Naive thymus-derived CD8-positive, alpha-beta T cell (primary cell): ENCODE measurements at regions of chr3 and their contacts with region 1.

Region 1: GRCh38 chr3:47164007-47164881 is at the start of gene SETD2:
- DNase-seq: peak; percentile 74 to 93 (median 80)
- ATAC-seq: peak; percentile 85
- H3K4me3 Mint-ChIP-seq: peak within 1 kb of the TSS; percentile 89 to 100 (median 98)
- H3K27ac Mint-ChIP-seq: peak within 1 kb of the TSS; percentile 96 to 99 (median 99)
- H3K4me1 Mint-ChIP-seq: peaks cover 21 to 57% (median 49%) of the 10 kb centered on the region in 4 donors
- H3K27me3 Mint-ChIP-seq: peaks cover 0 to 3% (median 0%) of the 10 kb centered on the region in 5 donors
- polyA plus RNA-seq, gene SETD2: 11.8 to 23.4 (median 14.3) TPM

Region 2: GRCh38 chr3:46935168-46935858 is 228.9 kb before region 1 on chr3:
- POLR2A ChIA-PET with region 1: no interaction called
- DNase-seq: no peak
- ATAC-seq: no peak
- H3K4me3 Mint-ChIP-seq: no peak overlapping the region
- H3K27ac Mint-ChIP-seq: peak overlapping the region in 5 of 10 donors; percentile 12 to 66 (median 29)
- H3K4me1 Mint-ChIP-seq: peaks cover 28 to 94% (median 66%) of the 10 kb centered on the region in 4 donors
- H3K27me3 Mint-ChIP-seq: no peaks in the 10 kb centered on the region

Region 3: GRCh38 chr3:46976326-46977190 is 187.7 kb before region 1 on chr3 and contains the start of gene CCDC12:
- POLR2A ChIA-PET with region 1: interaction called, 12 read pairs
- DNase-seq: peak; percentile 78 to 99 (median 94)
- ATAC-seq: peak; percentile 81 to 83
- H3K4me3 Mint-ChIP-seq: peak within 1 kb of the TSS; percentile 90 to 100 (median 99)
- H3K27ac Mint-ChIP-seq: peak within 1 kb of the TSS; percentile 96 to 100 (median 99)
- H3K4me1 Mint-ChIP-seq: peaks cover 36 to 80% (median 72%) of the 10 kb centered on the region in 4 donors
- H3K27me3 Mint-ChIP-seq: no peaks in the 10 kb centered on the region
- polyA plus RNA-seq, gene CCDC12: 81.9 to 106 (median 106) TPM

Region 4: GRCh38 chr3:47282424-47283192 is 118.4 kb after region 1 on chr3 and contains the starts of genes KIF9 and KLHL18:
- POLR2A ChIA-PET with region 1: interaction called, 13 read pairs
- DNase-seq: peak; percentile 92 to 99 (median 97)
- ATAC-seq: peak; percentile 81 to 82
- H3K4me3 Mint-ChIP-seq: peak within 1 kb of the TSS; percentile 91 to 100 (median 98)
- H3K27ac Mint-ChIP-seq: peak within 1 kb of the TSS; percentile 99 to 100 (median 99)
- H3K4me1 Mint-ChIP-seq: peaks cover 26 to 56% (median 50%) of the 10 kb centered on the region in 4 donors
- H3K27me3 Mint-ChIP-seq: peaks cover 0 to 3% (median 0%) of the 10 kb centered on the region in 5 donors
- polyA plus RNA-seq, gene KIF9: 3.7 to 10.2 (median 5.4) TPM
- polyA plus RNA-seq, gene KLHL18: 13.4 to 18.2 (median 16.4) TPM

Region 5: DNA sequence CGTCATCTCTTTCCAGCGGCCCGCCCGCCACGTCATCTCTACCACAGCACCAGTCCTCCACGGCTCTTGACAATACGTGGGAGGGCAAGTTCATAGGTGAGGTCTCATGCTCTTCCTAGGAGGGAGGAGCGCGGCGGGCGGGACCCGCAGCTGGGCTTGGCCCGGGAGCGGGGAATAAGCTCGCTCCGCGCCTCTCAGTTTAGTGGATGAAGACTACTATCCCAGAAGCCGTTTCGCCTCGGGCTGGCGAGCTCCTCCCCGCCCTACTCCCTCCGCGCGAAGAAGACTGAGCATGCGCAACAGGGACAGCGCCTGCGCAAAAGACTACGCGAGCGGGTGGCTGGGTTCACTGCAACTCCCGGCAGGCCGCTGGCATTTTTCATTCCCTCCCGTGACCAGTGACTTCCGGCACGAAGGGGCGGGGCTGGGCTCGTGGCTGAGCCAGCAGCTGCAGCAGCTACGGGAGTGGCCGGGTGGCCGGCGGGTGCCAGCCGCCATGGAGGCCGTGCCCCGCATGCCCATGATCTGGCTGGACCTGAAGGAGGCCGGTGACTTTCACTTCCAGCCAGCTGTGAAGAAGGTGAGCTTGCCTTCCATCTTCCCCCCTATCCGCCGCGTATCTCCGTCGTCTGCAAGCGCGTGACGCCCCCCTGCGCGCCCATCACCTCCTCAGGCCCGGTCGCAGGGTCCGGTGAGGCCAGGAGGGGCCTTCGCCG is 216.5 kb after region 1 on chr3 and contains the start of gene PTPN23:
- POLR2A ChIA-PET with region 1: interaction called, 13 read pairs
- DNase-seq: peak; percentile 94 to 99 (median 98)
- ATAC-seq: peak; percentile 81 to 82
- H3K4me3 Mint-ChIP-seq: peak within 1 kb of the TSS; percentile 85 to 100 (median 100)
- H3K27ac Mint-ChIP-seq: peak within 1 kb of the TSS; percentile 95 to 100 (median 100)
- H3K4me1 Mint-ChIP-seq: peaks cover 32 to 66% (median 57%) of the 10 kb centered on the region in 4 donors
- H3K27me3 Mint-ChIP-seq: no peaks in the 10 kb centered on the region
- polyA plus RNA-seq, gene PTPN23: 3.0 to 3.9 (median 3.8) TPM